Activated T-helper 1 cell treated with anti-CD3 and anti-CD28 coated beads, Interleukin-12 subunit alpha, Interleukin-12 subunit beta, Interleukin-2, Interleukin-4 antibody, amounts not matched to agents 30 ng/mL and 10 ng/mL and 1 ng/mL, durations not matched to agents 14 hours and 24 hours and 36 hours (primary cell): ENCODE measurements at regions of chr19 and their contacts with region 1.

Region 1: DNA sequence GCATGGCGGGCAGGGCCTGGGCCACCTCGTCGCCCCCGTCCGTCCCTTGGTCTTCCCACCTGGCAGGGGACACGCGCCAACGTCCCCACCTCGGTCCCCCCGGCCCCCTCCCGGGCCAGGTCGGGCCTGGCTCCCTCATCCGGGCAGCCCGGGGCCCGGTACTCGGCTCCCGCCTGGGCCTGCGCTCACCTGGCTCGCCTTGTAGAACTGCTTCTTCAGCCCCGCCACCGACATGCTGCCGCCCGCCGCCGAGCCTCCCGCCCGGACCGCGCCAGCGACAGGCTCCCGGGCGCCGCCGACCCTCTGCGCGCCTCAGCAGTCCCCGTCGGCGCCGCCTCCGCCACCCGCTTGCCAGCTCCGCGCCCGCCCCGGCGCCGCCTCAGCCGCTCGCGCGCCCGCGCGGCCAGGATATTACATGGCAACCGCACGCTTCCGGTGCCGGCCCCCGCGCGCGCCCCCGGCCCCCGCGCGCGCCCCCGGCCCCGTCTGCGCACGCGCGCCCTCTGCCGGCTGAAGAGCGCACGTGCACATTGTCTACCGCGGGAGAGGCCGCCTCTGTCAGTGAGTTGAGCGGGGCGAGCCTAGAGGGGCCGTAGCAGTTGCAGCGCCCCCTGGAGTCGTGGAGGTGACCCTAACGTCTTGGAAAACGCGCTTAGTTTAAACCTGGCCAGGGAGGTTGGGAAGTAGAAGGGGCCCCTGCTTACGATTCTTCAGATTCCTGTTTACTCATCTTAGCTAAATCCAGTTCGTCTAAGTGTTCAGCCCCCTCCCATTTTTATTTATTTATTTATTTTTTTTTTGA is at the start of gene SH3GL1:
- DNase-seq: peak; percentile 88
- H3K4me3 Mint-ChIP-seq: peak within 1 kb of the TSS; percentile 96
- H3K27ac Mint-ChIP-seq: peak within 1 kb of the TSS; percentile 94
- H3K4me1 Mint-ChIP-seq: peaks cover 71% of the 10 kb centered on the region
- H3K27me3 Mint-ChIP-seq: peaks cover 3% of the 10 kb centered on the region
- total RNA-seq, gene SH3GL1: 50.3 and 54.2 TPM in 2 replicates

Region 2: GRCh38 chr19:3185482-3186376 is 1214.6 kb before region 1 on chr19 and contains the start of gene NCLN:
- intact Hi-C with region 1: loop called (anchors 10 kb)
- DNase-seq: peak; percentile 91
- H3K4me3 Mint-ChIP-seq: peak within 1 kb of the TSS; percentile 93
- H3K27ac Mint-ChIP-seq: peak within 1 kb of the TSS; percentile 90
- H3K4me1 Mint-ChIP-seq: peaks cover 45% of the 10 kb centered on the region
- H3K27me3 Mint-ChIP-seq: no peaks in the 10 kb centered on the region
- total RNA-seq, gene NCLN: 112 and 118 TPM in 2 replicates

Region 3: GRCh38 chr19:4229179-4229931 is 171.0 kb before region 1 on chr19 and contains the start of gene EBI3:
- intact Hi-C with region 1: loop called (anchors 1 kb)
- DNase-seq: peak; percentile 60
- H3K4me3 Mint-ChIP-seq: no peak within 1 kb of the TSS
- H3K27ac Mint-ChIP-seq: no peak within 1 kb of the TSS
- H3K4me1 Mint-ChIP-seq: peaks cover 11% of the 10 kb centered on the region
- H3K27me3 Mint-ChIP-seq: no peaks in the 10 kb centered on the region
- total RNA-seq, gene EBI3: 43.3 and 49.7 TPM in 2 replicates

Region 4: DNA sequence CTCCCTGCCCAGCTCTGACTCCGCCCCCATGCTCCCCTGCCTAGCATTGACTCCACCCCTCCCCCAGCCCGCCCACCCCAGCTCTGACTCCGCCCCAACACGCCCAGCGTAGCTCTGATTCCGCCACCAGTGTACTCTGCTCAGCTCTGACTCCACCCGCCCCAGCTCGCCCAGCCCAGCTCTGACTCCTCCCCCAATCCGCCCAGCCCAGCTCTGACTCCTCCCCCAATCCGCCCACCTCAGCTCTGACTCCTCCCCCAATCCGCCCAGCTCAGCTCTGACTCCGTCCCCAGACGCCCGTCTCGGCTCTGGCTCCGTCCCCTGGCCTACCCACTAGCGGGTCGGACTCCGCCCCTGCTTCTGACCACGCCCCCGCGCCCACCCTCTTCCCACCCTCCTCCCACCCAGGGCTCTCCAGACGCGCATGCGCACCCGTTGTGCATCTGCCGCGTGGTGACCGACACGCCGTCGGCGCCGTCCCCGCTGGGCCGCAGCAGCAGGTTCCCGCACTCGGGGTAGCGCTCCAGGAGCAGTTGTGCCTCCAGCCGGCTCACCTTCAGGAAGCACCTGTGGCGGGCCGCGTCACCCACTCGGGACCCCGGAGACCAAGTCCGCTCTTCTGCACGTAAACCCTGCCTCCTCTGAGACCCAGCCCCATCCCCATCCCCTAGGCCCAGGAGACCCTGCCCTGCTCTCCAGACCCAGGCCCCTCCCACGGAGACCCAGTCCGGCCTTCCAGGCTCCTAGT is 71.9 kb before region 1 on chr19:
- intact Hi-C with region 1: loop called (anchors 1 kb)
- DNase-seq: peak; percentile 87
- H3K4me3 Mint-ChIP-seq: peak overlapping the region; percentile 84
- H3K27ac Mint-ChIP-seq: peak overlapping the region; percentile 90
- H3K4me1 Mint-ChIP-seq: peaks cover 15% of the 10 kb centered on the region
- H3K27me3 Mint-ChIP-seq: peaks cover 9% of the 10 kb centered on the region

Region 5: GRCh38 chr19:4379355-4380253 is 20.7 kb before region 1 on chr19:
- intact Hi-C with region 1: loop called (anchors 1 kb)
- DNase-seq: no peak
- H3K4me3 Mint-ChIP-seq: peak overlapping the region; percentile 78
- H3K27ac Mint-ChIP-seq: peak overlapping the region; percentile 83
- H3K4me1 Mint-ChIP-seq: peaks cover 49% of the 10 kb centered on the region
- H3K27me3 Mint-ChIP-seq: no peaks in the 10 kb centered on the region

Region 6: DNA sequence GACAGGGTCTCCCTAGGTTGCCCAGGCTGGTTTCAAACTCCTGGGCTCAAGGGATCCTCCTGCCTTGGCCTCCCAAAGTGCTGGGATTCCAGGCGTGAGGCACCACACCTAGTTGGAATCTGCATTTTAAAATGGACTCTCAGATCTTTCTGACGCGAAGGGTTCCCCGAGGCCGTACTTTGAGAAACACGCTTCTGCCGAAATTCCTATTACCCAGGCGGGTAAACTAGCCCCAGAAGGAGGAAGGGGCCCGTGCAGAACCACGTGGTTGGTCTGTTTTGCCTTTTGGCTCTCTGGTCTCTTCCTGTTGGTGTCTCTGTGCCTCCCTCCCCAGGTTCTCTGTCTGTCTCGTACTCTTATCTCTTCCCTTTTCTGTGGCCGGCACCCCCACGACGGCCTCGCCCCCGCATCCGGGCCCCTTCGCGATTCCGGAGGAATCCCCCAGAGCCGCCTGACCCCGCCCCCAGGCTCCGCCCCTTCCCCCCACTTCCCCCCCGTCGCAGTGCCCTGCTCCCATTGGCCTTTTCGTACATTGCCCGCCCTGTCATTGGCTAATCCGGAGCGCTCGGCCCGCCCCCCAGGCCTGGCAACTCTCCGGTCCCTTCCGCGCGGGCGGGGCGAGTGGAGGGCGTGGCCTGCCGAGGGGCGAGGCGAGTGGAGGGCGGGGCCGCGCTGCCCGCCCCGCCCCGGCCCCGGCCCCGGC is 238.6 kb after region 1 on chr19 and contains the start of gene TNFAIP8L1:
- intact Hi-C with region 1: loop called (anchors 1 kb)
- DNase-seq: peak; percentile 99
- H3K4me3 Mint-ChIP-seq: peak within 1 kb of the TSS; percentile 98
- H3K27ac Mint-ChIP-seq: peak within 1 kb of the TSS; percentile 94
- H3K4me1 Mint-ChIP-seq: peaks cover 32% of the 10 kb centered on the region
- H3K27me3 Mint-ChIP-seq: no peaks in the 10 kb centered on the region
- total RNA-seq, gene TNFAIP8L1: 13.2 and 13.7 TPM in 2 replicates